B cell (primary cell): ENCODE measurements at regions of chr5 and their contacts with region 1.

Region 1: GRCh38 chr5:88729084-88729828 is 153.7 kb downstream of the MEF2C start:
- DNase-seq: peak; percentile 89
- ATAC-seq: peak; percentile 38
- H3K4me3 ChIP-seq: no peak overlapping the region
- H3K4me3 Mint-ChIP-seq: peak overlapping the region; percentile 15
- H3K27ac ChIP-seq: peak overlapping the region; percentile 26 to 85
- H3K27ac Mint-ChIP-seq: peak overlapping the region; percentile 76
- H3K4me1 ChIP-seq: peaks cover 29 to 35% of the 10 kb centered on the region in 2 donors
- H3K4me1 Mint-ChIP-seq: peaks cover 42% of the 10 kb centered on the region
- H3K27me3 ChIP-seq: no peaks in the 10 kb centered on the region
- H3K27me3 Mint-ChIP-seq: no peaks in the 10 kb centered on the region
- CTCF ChIP-seq: peak; percentile 87

Region 2: GRCh38 chr5:88746438-88746882 is 17.2 kb after region 1 on chr5:
- CTCF ChIA-PET with region 1: interaction called, 26 read pairs
- POLR2A ChIA-PET with region 1: no interaction called
- intact Hi-C with region 1: loop called (anchors 1 kb)
- DNase-seq: peak; percentile 61
- ATAC-seq: peak; percentile 67
- H3K4me3 ChIP-seq: no peak overlapping the region
- H3K4me3 Mint-ChIP-seq: no peak overlapping the region
- H3K27ac ChIP-seq: peak overlapping the region; percentile 45 to 81
- H3K27ac Mint-ChIP-seq: peak overlapping the region; percentile 92
- H3K4me1 ChIP-seq: peaks cover 0 to 3% of the 10 kb centered on the region in 2 donors
- H3K4me1 Mint-ChIP-seq: peaks cover 38% of the 10 kb centered on the region
- H3K27me3 ChIP-seq: no peaks in the 10 kb centered on the region
- H3K27me3 Mint-ChIP-seq: no peaks in the 10 kb centered on the region
- CTCF ChIP-seq: no peak

Region 3: DNA sequence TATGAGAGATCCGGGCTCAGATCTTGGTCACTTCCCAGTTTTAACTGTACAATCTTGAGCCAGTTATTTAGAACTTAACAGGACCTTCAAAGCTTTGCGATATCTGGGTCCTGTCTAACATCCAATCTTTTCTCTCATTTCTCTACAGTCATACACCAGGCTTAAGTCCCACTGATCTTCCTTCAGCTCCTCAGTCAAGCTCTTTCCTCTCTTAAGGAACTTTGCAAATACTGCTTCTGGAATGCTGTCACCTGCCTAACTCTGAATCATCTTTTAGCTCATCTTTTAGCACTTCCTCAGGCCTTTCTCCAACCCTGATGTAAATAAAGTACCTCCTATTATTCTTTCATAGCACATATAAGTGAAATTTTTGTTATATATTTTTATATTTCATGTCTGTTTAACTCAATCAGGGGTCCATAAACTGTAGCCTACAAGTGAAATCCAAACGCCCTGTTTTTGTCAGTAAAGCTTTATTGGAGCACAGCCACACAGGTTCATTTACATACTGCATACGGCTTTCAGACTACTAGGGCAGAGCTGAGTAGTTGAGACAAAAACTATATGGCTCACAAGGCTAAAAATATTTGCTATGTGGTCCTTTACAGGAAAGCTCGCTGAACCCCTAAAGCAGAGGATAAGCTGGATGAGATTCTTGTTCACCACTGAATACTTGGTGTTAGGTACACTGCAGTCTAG is 90.2 kb after region 1 on chr5:
- CTCF ChIA-PET with region 1: interaction called, 34 read pairs
- POLR2A ChIA-PET with region 1: interaction called, 5 read pairs
- intact Hi-C with region 1: no loop called
- DNase-seq: peak; percentile 40
- ATAC-seq: peak; percentile 56
- H3K4me3 ChIP-seq: peak overlapping the region in 3 of 5 experiments; percentile 0 to 35 (median 15)
- H3K4me3 Mint-ChIP-seq: peak overlapping the region; percentile 72
- H3K27ac ChIP-seq: peak overlapping the region; percentile 35 to 94
- H3K27ac Mint-ChIP-seq: peak overlapping the region; percentile 88
- H3K4me1 ChIP-seq: peaks cover 51 to 92% of the 10 kb centered on the region in 2 donors
- H3K4me1 Mint-ChIP-seq: peaks cover 72% of the 10 kb centered on the region
- H3K27me3 ChIP-seq: no peaks in the 10 kb centered on the region
- H3K27me3 Mint-ChIP-seq: no peaks in the 10 kb centered on the region
- CTCF ChIP-seq: no peak

Region 4: DNA sequence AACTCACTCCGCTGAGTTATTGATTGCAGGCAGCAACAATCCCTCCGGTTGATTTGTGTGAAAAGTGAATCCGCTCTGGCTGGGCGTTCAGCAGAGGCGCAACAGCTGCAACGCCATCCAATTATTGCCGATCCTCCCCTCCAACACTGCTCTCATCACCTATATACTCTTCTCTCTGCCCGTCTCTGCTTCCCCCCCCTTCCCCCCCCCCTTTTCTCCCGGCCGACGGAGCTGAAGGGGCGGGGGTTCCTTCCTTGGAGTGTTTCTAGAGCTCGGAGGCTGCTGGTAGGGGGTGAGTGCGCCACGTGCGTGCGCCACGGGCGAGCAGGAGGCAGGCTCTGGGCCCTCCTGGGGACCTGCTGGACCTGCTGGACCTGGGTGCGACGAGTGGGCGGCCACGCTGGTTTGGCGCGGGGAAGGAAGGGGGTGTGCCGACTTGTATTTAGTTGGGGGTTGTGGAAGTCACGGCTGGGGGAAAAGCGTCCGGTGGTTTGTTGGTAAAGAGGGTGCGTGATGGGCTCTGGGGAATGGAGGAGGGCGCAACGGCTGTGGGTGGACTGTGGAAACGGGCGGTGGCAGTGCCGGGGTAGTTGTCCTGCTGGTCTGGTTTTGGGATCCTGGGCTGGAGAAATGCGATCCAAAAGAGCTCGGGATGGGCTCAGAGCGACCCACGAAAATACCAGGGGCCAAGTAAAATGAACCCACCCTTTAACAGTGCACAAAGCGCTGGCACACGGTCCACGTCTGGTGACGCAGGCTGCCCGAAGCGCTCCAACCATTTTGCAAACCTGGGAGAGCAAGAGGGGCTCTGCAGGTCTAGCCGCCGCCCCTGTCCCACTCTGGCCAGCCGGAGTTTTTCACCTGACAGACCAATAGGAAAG is 160.2 kb after region 1 on chr5:
- CTCF ChIA-PET with region 1: interaction called, 67 read pairs
- POLR2A ChIA-PET with region 1: interaction called, 19 read pairs
- intact Hi-C with region 1: no loop called
- DNase-seq: peak; percentile 79
- ATAC-seq: peak; percentile 60
- H3K4me3 ChIP-seq: peak overlapping the region; percentile 77 to 93 (median 80)
- H3K4me3 Mint-ChIP-seq: peak overlapping the region; percentile 94
- H3K27ac ChIP-seq: peak overlapping the region; percentile 86 to 90
- H3K27ac Mint-ChIP-seq: peak overlapping the region; percentile 96
- H3K4me1 ChIP-seq: peaks cover 33 to 44% of the 10 kb centered on the region in 2 donors
- H3K4me1 Mint-ChIP-seq: peaks cover 67% of the 10 kb centered on the region
- H3K27me3 ChIP-seq: no peaks in the 10 kb centered on the region
- H3K27me3 Mint-ChIP-seq: no peaks in the 10 kb centered on the region
- CTCF ChIP-seq: no peak

Region 5: DNA sequence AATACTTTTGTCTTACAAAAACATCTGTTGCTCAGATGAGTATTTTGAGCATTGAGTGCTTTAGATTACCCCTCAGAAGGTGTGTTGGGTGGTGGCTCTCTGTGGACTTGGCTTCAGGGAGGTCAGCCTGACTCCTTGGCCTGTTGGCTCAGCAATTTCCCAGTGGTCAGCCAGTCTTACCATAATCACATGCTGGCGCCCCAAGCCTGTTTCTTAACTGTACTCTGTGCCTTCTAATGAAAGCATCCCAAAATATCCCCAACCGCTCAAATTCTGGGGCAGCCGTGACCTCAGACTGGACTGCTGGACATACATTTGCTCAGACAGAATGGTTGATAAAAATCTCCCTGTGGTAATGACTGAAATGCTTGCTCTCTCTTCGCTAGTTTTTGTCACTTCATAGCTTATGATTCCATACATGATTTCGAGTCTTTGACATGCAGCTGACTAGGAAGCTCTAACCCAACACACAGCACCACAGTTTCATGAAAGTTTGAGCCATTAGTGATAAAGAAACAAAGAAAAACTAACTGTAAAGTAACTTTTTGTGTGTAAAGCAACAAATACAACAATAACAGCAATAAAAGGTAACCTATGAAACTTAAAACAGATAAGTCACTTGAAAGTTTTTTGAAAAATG is 716.0 kb after region 1 on chr5:
- CTCF ChIA-PET with region 1: interaction called, 4 read pairs
- POLR2A ChIA-PET with region 1: interaction called, 9 read pairs
- intact Hi-C with region 1: loop called (anchors 5 kb)
- DNase-seq: no peak
- ATAC-seq: no peak
- H3K4me3 ChIP-seq: peak overlapping the region in 1 of 5 experiments; percentile 42
- H3K4me3 Mint-ChIP-seq: peak overlapping the region; percentile 47
- H3K27ac ChIP-seq: peak overlapping the region; percentile 72 to 89
- H3K27ac Mint-ChIP-seq: peak overlapping the region; percentile 88
- H3K4me1 ChIP-seq: peaks cover 66 to 91% of the 10 kb centered on the region in 2 donors
- H3K4me1 Mint-ChIP-seq: peaks cover 72% of the 10 kb centered on the region
- H3K27me3 ChIP-seq: no peaks in the 10 kb centered on the region
- H3K27me3 Mint-ChIP-seq: no peaks in the 10 kb centered on the region
- CTCF ChIP-seq: no peak

Region 6: GRCh38 chr5:90264689-90265544 is 1535.7 kb after region 1 on chr5:
- CTCF ChIA-PET with region 1: interaction called, 159 read pairs
- POLR2A ChIA-PET with region 1: interaction called, 6 read pairs
- intact Hi-C with region 1: loop called (anchors 1 kb)
- DNase-seq: peak; percentile 79
- ATAC-seq: peak; percentile 58
- H3K4me3 ChIP-seq: no peak overlapping the region
- H3K4me3 Mint-ChIP-seq: peak overlapping the region; percentile 64
- H3K27ac ChIP-seq: no peak overlapping the region
- H3K27ac Mint-ChIP-seq: no peak overlapping the region
- H3K4me1 ChIP-seq: peaks cover 6 to 7% of the 10 kb centered on the region in 2 donors
- H3K4me1 Mint-ChIP-seq: peaks cover 7% of the 10 kb centered on the region
- H3K27me3 ChIP-seq: no peaks in the 10 kb centered on the region
- H3K27me3 Mint-ChIP-seq: peaks cover 2% of the 10 kb centered on the region
- CTCF ChIP-seq: peak; percentile 98